ENCODE measurements at regions of chr3 and their contacts with region 1.

Region 1: GRCh38 chr3:124688581-124689454 is 41.4 kb upstream of the UMPS start:
- DNase-seq: peak; percentile 57 to 81
- H3K4me3 ChIP-seq: no peak overlapping the region
- H3K27ac ChIP-seq: no peak overlapping the region
- H3K4me1 ChIP-seq: no peaks in the 10 kb centered on the region
- H3K27me3 ChIP-seq: peaks cover 5% of the 10 kb centered on the region; the same call in 1 of the 2 replicates
- CTCF ChIP-seq: peak; percentile 89

Region 2: GRCh38 chr3:124383083-124383482 is 305.7 kb before region 1 on chr3:
- CTCF ChIA-PET with region 1: no interaction called
- POLR2A ChIA-PET with region 1: no interaction called
- intact Hi-C with region 1: no loop called
- DNase-seq: no peak
- H3K4me3 ChIP-seq: no peak overlapping the region
- H3K27ac ChIP-seq: no peak overlapping the region
- H3K4me1 ChIP-seq: no peaks in the 10 kb centered on the region
- H3K27me3 ChIP-seq: peaks cover 53% of the 10 kb centered on the region
- CTCF ChIP-seq: no peak

Region 3: GRCh38 chr3:124584552-124585391 is 104.0 kb before region 1 on chr3:
- CTCF ChIA-PET with region 1: no interaction called
- POLR2A ChIA-PET with region 1: no interaction called
- intact Hi-C with region 1: loop called (anchors 5 kb)
- DNase-seq: peak; percentile 45 to 84
- H3K4me3 ChIP-seq: peak overlapping the region; percentile 57
- H3K27ac ChIP-seq: no peak overlapping the region
- H3K4me1 ChIP-seq: peaks cover 6% of the 10 kb centered on the region; the same call in 1 of the 2 replicates
- H3K27me3 ChIP-seq: peaks cover 22% of the 10 kb centered on the region
- CTCF ChIP-seq: no peak

Region 4: DNA sequence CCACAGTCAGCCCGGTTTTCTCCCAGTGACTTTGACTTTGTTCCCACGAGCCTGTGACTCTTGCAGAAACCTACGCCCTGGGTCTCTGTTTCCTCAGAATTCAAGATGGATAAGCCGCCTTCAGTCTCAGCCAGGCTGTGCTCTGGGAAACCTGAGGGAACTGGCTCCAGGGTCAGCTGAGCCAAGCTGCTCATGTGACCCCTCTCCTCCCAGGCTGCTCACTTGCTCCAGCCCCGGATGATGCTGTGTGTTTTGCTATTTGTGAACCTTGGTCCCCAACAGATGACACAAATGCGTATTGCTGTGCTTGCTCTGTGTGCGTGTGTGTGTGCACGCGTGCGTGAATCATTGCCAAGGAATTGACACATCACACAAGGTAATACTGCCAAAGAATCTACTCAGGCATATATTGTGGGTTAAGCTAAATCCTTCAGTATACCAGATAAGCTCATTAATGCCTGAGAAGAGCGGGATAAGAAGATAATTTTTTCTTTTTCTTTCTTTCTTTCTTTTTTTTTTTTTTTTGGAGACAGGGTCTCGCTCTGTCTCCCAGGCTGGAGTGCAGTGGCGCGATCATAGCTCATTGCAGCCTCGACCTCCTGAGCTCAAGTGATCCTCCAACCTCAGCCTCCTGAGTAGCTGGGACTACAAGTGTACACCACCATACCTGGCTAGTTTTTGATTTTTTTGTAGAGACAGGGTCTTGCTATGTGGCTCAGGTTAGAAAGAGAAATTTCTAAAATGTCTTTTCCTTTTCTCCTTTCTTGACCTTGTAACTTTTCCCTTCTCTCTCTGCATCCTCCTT is 12.3 kb after region 1 on chr3:
- CTCF ChIA-PET with region 1: interaction called, 10 read pairs
- POLR2A ChIA-PET with region 1: no interaction called
- intact Hi-C with region 1: no loop called
- DNase-seq: no peak
- H3K4me3 ChIP-seq: no peak overlapping the region
- H3K27ac ChIP-seq: no peak overlapping the region
- H3K4me1 ChIP-seq: no peaks in the 10 kb centered on the region
- H3K27me3 ChIP-seq: 0 out of 2 replicates have a peak, but pooled peaks cover 5% of the 10 kb centered on the region
- CTCF ChIP-seq: no peak

Region 5: GRCh38 chr3:124905849-124906248 is 217.0 kb after region 1 on chr3:
- CTCF ChIA-PET with region 1: no interaction called
- POLR2A ChIA-PET with region 1: no interaction called
- intact Hi-C with region 1: loop called (anchors 2 kb)
- DNase-seq: no peak
- H3K4me3 ChIP-seq: no peak overlapping the region
- H3K27ac ChIP-seq: no peak overlapping the region
- H3K4me1 ChIP-seq: no peaks in the 10 kb centered on the region
- H3K27me3 ChIP-seq: no peaks in the 10 kb centered on the region
- CTCF ChIP-seq: no peak

Measured in PC-9 (cell line).